Activated CD4-positive, alpha-beta memory T cell treated with anti-CD3 and anti-CD28 coated beads for 36 hours (primary cell): ENCODE measurements at regions of chr12 and their contacts with region 1.

Region 1: DNA sequence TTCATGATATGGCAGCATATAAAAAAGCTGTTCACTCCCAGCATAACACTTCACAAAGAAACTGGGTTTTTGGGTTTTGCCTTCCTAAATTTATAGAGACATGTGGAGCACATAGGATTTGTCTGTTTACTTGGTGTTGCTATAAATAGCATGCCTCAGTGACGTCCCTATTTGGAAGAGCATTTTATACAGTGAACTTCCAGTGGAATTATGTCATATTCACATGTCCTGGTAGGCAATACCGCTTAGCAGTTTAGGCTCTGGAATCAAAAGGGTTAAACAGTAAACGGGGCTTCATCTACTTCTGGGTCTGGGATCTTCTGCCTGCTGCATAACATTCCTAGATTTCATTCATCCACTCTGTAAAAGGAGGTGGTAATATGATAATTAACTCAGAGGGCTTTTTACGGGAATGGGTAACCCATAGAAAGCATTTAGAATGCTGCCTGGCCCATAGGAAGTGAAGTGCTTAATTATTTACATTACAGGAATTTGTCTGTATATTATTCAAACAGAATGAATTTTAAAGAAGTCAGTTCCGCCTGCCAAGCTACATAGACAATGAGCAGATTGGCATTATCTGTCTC is 396.1 kb downstream of the TMTC2 start:
- DNase-seq: no peak
- H3K4me3 Mint-ChIP-seq: no peak overlapping the region
- H3K27ac Mint-ChIP-seq: no peak overlapping the region
- H3K4me1 Mint-ChIP-seq: no peaks in the 10 kb centered on the region
- H3K27me3 Mint-ChIP-seq: no peaks in the 10 kb centered on the region

Region 2: DNA sequence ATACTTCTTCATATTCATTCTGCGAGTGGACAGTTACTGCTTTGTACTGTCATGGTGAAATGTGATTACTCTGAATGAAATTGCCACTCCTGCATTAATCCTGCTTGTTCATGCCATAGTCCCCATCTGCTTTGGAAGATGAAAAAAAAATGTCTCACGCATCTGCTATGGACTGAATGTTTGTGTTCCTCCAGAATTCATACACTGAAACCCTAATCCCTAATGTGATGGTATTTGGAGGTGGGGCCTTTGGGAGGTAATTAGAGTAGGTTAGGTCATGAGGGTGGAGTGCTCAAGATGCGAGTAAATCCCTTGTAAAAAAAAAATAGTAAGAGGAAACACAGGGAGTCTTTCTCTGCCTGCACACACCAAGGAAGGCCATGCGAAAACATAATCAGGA is 31.2 kb after region 1 on chr12:
- CTCF ChIA-PET with region 1: no interaction called
- POLR2A ChIA-PET with region 1: no interaction called
- intact Hi-C with region 1: loop called (anchors 1 kb)
- DNase-seq: no peak
- H3K4me3 Mint-ChIP-seq: no peak overlapping the region
- H3K27ac Mint-ChIP-seq: no peak overlapping the region
- H3K4me1 Mint-ChIP-seq: no peaks in the 10 kb centered on the region
- H3K27me3 Mint-ChIP-seq: no peaks in the 10 kb centered on the region